Heart right ventricle (tissue), 16 donors: ENCODE measurements at regions of chr16 and their contacts with region 1.

Region 1: DNA sequence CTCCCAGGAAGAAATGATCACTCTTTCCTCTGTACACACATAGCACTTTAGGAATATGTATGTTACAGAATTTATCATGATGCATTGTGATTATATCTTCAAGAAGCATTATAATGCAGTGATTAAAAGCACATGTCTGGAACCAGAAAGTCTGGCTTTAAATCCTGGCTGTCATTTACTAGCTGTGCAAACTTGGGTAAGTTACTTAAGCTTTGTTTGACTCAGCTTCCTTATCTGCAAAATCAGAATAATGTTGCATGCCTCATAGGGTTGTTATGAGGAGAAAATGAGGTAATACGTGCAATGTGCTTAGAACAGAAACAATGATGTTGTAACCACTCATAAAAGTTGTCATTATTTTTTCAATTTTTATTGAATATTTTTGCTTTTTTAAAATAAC is 156.3 kb upstream of the ZKSCAN2 start:
- DNase-seq: no peak
- ATAC-seq: no peak
- H3K4me3 ChIP-seq: no peak overlapping the region
- H3K27ac ChIP-seq: no peak overlapping the region
- H3K4me1 ChIP-seq: no peaks in the 10 kb centered on the region
- H3K27me3 ChIP-seq: no peaks in the 10 kb centered on the region
- CTCF ChIP-seq: no peak

Region 2: GRCh38 chr16:25426829-25427228 is 12.8 kb after region 1 on chr16:
- intact Hi-C with region 1: loop called in 1 of 10 experiments (anchors 2 kb)
- DNase-seq: no peak
- ATAC-seq: no peak
- H3K4me3 ChIP-seq: no peak overlapping the region
- H3K27ac ChIP-seq: no peak overlapping the region
- H3K4me1 ChIP-seq: no peaks in the 10 kb centered on the region
- H3K27me3 ChIP-seq: peaks cover 0 to 3% (median 0%) of the 10 kb centered on the region in 7 donors
- CTCF ChIP-seq: no peak

Region 3: DNA sequence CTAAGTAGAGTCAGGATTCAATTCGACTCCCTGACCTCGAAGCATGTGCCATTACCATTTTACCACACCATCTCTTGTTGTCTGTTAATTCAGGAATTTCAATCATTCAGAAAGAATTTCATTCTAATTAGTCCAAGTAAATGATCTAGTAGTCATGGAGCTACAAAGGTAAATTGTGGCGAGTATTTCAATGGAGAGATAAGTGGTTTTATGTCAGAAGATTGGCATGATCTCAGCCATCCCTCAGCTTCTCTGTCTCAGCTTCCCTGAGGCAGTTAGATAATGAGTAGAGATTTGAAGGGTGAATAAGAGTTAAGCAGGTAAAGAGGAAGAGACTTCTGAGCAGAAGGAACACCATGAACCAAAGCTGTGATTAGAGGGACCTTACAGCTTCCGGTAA is 371.4 kb after region 1 on chr16:
- intact Hi-C with region 1: no loop called
- DNase-seq: no peak
- ATAC-seq: no peak
- H3K4me3 ChIP-seq: no peak overlapping the region
- H3K27ac ChIP-seq: no peak overlapping the region
- H3K4me1 ChIP-seq: no peaks in the 10 kb centered on the region
- H3K27me3 ChIP-seq: no peaks in the 10 kb centered on the region
- CTCF ChIP-seq: no peak